BJ (cell line): ENCODE measurements at regions of chr3 and their contacts with region 1.

Region 1: DNA sequence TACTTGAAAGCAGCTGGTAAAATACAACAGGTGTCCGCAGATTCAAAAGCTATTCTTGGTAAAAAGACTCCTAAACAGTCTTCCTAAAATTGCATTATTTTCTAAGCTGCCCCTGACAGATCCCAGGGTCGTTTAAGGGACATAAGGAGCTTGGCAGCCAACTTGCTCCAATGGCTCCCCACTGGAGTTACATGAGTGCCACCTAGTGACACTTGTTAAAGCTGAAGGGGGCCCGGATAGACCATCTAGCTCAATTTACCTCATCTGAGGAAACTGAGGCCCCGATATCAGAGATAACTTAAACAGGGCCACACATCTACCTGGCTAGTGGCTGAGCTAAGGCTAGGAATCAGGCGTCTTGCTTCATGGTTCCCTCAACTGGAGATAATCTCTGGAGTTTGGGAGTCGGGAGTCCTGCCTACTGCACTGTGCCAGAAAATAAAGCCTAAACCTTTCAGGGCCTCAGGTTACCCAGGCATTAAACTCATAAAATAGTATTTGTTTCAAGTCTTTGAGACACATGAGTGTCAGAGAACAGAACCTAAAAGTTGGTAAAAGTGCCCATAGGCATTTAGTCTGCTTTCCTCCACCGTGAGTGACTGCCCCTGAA is 6.5 kb upstream of the TBC1D23 start:
- DNase-seq: no peak
- H3K4me3 ChIP-seq: no peak overlapping the region
- H3K27me3 ChIP-seq: no peaks in the 10 kb centered on the region
- CTCF ChIP-seq: peak; percentile 77

Region 2: GRCh38 chr3:99458013-99458412 is 796.3 kb before region 1 on chr3:
- CTCF ChIA-PET with region 1: no interaction called
- POLR2A ChIA-PET with region 1: no interaction called
- DNase-seq: no peak
- H3K4me3 ChIP-seq: no peak overlapping the region
- H3K27me3 ChIP-seq: no peaks in the 10 kb centered on the region
- CTCF ChIP-seq: no peak

Region 3: DNA sequence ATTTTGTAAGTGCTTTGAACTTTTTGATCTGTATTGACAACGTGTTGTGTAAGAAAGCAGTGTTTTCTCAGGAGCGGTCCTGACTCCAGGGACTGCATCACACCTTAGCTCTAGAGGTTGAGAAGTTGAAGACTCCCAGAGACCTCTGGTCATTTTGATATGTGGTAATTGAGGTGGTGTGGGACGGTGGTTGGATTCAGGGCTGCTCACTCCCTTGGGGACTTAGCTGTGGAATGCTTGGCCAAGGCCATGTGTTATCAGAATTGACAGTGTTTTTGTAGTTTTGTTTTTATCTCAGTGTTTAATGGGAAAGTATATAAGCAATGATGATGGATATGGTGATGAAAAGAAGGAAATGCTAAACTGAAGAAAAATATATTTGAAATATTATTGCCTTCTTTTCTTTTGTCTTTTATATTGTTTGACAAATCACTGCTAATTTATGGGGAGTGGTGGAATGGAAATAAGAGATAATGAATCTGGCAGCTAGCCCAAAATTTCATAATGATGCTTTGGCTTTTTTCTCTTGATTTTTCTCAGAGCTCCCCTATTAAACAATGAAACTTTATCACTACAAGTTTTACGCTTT is 420.6 kb before region 1 on chr3:
- CTCF ChIA-PET with region 1: interaction called, 12 read pairs
- POLR2A ChIA-PET with region 1: interaction called, 5 read pairs
- DNase-seq: no peak
- H3K4me3 ChIP-seq: no peak overlapping the region
- H3K27me3 ChIP-seq: no peaks in the 10 kb centered on the region
- CTCF ChIP-seq: no peak

Region 4: DNA sequence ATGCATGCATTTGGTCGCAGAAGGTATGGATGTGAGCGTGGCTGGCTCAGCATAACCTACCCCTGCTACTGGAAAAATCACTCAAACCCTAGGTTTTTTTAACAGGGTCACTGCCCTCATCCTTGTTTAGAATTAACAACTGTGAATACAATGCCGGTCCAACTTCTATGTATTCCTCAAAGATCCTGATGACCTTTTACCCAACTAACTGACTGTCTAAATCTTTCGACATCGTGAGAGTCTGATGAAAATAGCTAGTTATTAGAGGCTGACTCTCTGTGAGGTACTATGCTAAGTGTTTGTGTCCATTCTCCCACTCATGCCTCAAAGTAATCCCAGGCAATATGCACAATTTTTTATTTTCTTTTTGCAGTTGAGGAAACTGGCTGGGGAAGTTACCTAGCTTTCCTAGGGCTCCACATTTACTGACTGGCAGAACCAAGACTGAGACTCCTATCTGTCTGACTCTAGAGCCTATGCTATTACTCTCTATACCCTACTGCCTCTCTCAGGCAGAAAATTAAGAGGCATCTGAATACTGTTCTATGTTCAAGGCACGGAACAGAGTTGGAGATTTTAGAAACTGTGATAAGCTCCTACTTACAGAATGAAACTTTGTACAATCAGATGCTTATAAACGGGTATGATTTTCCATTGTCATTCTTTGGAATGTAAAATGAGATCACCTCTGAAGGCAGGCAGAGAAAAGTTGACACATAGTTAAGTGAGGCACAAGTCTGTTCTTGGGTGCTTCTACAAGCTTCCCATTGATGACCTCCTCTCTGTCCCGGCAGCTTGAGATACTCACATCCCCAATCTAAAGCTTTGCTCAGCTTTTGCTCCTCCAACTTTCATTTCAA is 196.3 kb before region 1 on chr3:
- CTCF ChIA-PET with region 1: interaction called, 11 read pairs
- POLR2A ChIA-PET with region 1: no interaction called
- DNase-seq: no peak
- H3K4me3 ChIP-seq: no peak overlapping the region
- H3K27me3 ChIP-seq: no peaks in the 10 kb centered on the region
- CTCF ChIP-seq: no peak

Region 5: DNA sequence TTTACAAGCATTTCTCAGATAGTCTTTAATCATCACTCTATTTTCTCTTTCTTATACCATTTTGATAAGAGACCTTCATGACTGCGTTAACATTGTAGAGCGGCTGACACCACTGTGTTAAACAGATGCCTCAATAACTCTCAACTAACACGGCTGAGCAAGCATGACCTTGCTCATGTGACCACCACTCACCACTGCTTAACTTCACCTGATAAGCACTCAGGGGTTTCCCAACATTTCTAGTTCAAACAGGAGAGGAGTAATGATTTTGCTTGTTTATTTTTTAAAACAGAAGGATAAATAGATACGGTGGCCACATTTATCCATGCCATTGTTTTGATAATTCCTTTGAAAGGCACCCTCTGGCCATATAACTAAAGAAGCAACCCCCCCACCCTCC is 200.4 kb after region 1 on chr3:
- CTCF ChIA-PET with region 1: no interaction called
- POLR2A ChIA-PET with region 1: no interaction called
- DNase-seq: no peak
- H3K4me3 ChIP-seq: no peak overlapping the region
- H3K27me3 ChIP-seq: no peaks in the 10 kb centered on the region
- CTCF ChIP-seq: no peak